ENCODE measurements at regions of chr6 and their contacts with region 1.

Region 1: DNA sequence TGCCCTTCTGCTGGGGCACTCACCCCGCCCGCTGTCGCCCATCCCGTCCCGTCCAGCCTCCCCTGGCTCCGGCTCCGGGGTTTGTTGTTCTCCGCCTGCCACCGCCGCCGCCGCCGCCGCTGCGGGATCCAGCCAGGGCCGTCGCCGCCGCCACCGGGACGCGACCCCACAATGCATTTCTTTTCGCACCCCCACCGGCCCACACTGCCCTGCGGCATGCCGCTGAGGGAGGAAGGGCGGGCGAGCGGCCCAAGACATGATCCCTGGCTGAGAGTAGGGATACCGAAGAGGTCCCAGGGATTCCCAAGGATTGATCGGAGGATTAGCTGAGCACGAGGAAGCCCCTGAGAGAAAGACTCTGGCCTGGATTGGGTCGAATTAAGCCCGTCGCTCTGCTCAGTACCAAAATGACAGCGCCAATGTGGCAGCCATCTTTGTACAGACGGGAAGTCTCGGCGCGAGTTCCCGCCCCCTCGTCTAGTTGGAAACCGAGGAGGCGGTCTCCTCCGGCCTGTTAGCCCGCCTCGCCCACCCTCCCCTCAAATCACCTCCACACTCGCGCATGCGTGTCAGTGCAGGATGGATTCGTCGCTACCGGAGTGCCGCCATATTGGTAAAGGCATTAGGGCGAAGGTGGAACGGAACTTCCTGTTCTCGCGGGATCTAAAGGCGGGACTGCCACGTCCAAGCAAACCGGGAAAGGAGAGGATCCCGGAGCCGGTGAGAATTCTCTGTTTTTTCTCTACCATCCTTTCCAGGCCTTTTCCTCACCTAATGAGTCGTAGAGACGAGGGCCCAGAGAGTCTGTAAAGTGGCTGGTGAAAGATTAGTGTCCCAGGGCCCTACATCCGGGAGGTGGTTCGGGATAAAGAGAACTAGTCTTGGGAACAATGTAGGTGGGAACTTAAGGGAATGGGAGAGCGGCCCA is at the starts of genes RXRB and SLC39A7:
- DNase-seq: peak; percentile 100
- ATAC-seq: peak; percentile 64
- H3K4me3 Mint-ChIP-seq: peak within 1 kb of the TSS; percentile 100
- H3K27ac Mint-ChIP-seq: peak within 1 kb of the TSS; percentile 99
- H3K4me1 Mint-ChIP-seq: peaks cover 64% of the 10 kb centered on the region
- H3K27me3 Mint-ChIP-seq: no peaks in the 10 kb centered on the region
- total RNA-seq, gene RXRB: 41.0 to 45.4 TPM
- total RNA-seq, gene SLC39A7: 33.0 to 41.8 TPM

Region 2: DNA sequence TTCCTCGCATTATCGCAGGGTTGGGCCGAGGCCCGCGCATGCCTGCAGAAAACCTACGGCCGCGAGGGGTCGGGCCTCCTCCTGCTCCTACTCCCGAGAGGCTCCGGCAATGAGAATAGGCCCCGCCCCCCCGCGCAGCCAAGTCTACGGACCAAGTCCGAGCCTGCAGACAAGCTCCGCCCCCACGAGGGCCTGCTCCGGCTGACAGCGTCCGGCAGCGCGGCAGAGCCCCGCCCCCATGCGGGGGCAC is 1004.9 kb before region 1 on chr6:
- CTCF ChIA-PET with region 1: no interaction called
- POLR2A ChIA-PET with region 1: no interaction called
- intact Hi-C with region 1: loop called in 1 of 2 experiments (anchors 5 kb)
- DNase-seq: peak; percentile 100
- ATAC-seq: peak; percentile 90
- H3K4me3 Mint-ChIP-seq: peak overlapping the region; percentile 94
- H3K27ac Mint-ChIP-seq: peak overlapping the region; percentile 90
- H3K4me1 Mint-ChIP-seq: peaks cover 32% of the 10 kb centered on the region
- H3K27me3 Mint-ChIP-seq: no peaks in the 10 kb centered on the region

Region 3: DNA sequence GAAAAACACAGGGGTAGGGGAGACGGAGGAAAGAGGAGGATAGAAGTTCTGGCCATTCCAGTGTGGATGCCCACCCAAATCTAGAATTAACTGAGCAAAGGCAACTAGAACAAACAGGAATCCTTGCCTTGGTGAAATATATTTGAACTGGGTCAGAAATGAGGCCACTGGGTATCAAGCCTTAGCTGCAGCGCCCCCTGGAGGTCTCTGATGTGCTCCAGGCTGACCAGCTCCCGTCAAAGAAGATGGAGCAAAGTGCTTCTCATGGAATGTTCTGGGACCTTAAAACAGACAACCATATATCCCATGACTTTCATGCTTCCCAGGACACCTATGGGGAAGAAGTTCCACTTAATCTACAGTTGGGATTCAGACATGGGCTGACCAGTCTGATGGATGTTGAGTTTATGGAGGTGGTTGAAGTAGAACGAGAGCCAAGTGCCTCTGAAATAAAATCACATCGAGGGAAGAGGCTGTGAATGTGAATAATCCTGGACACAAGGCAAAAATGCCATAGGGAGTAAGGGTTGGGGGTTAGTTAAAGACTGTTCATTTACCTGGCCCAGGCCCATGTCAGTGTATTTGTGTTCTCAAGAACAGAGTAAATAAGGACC is 74.3 kb before region 1 on chr6:
- CTCF ChIA-PET with region 1: interaction called, 3 read pairs
- POLR2A ChIA-PET with region 1: no interaction called
- intact Hi-C with region 1: loop called (anchors 1 to 10 kb)
- DNase-seq: peak; percentile 83
- ATAC-seq: peak; percentile 42
- H3K4me3 Mint-ChIP-seq: no peak overlapping the region
- H3K27ac Mint-ChIP-seq: no peak overlapping the region
- H3K4me1 Mint-ChIP-seq: no peaks in the 10 kb centered on the region
- H3K27me3 Mint-ChIP-seq: peaks cover 7% of the 10 kb centered on the region

Region 4: GRCh38 chr6:33248925-33249731 is 48.6 kb after region 1 on chr6:
- CTCF ChIA-PET with region 1: interaction called, 10 read pairs
- POLR2A ChIA-PET with region 1: interaction called, 19 read pairs
- intact Hi-C with region 1: loop called (anchors 1 kb)
- DNase-seq: peak; percentile 99
- ATAC-seq: peak; percentile 93
- H3K4me3 Mint-ChIP-seq: peak overlapping the region; percentile 91
- H3K27ac Mint-ChIP-seq: peak overlapping the region; percentile 96
- H3K4me1 Mint-ChIP-seq: peaks cover 41% of the 10 kb centered on the region
- H3K27me3 Mint-ChIP-seq: peaks cover 3% of the 10 kb centered on the region

Region 5: GRCh38 chr6:33323623-33323948 is 123.1 kb after region 1 on chr6:
- CTCF ChIA-PET with region 1: no interaction called
- POLR2A ChIA-PET with region 1: no interaction called
- intact Hi-C with region 1: loop called in 1 of 2 experiments (anchors 1 kb)
- DNase-seq: no peak
- ATAC-seq: no peak
- H3K4me3 Mint-ChIP-seq: peak overlapping the region; percentile 99
- H3K27ac Mint-ChIP-seq: peak overlapping the region; percentile 99
- H3K4me1 Mint-ChIP-seq: peaks cover 46% of the 10 kb centered on the region
- H3K27me3 Mint-ChIP-seq: no peaks in the 10 kb centered on the region

Region 6: GRCh38 chr6:33711140-33712129 is 511.0 kb after region 1 on chr6 and contains the start of gene UQCC2:
- CTCF ChIA-PET with region 1: no interaction called
- POLR2A ChIA-PET with region 1: no interaction called
- intact Hi-C with region 1: loop called in 1 of 2 experiments (anchors 1 kb)
- DNase-seq: peak; percentile 99
- ATAC-seq: peak; percentile 99
- H3K4me3 Mint-ChIP-seq: peak within 1 kb of the TSS; percentile 90
- H3K27ac Mint-ChIP-seq: peak within 1 kb of the TSS; percentile 96
- H3K4me1 Mint-ChIP-seq: peaks cover 34% of the 10 kb centered on the region
- H3K27me3 Mint-ChIP-seq: no peaks in the 10 kb centered on the region
- total RNA-seq, gene UQCC2: 141 to 147 TPM

Measured in activated CD4-positive, alpha-beta T cell treated with anti-CD3 and anti-CD28 coated beads for 36 hours (primary cell).